ENCODE measurements at regions of chr17 and their contacts with region 1.

Region 1: GRCh38 chr17:35537601-35538141 is at the start of gene SLFN12L:
- DNase-seq: no peak
- H3K27ac ChIP-seq: no peak within 1 kb of the TSS
- CTCF ChIP-seq: no peak

Region 2: GRCh38 chr17:35170968-35171771 is 366.5 kb before region 1 on chr17:
- CTCF ChIA-PET with region 1: interaction called, 14 read pairs
- POLR2A ChIA-PET with region 1: no interaction called
- DNase-seq: peak; percentile 44
- H3K27ac ChIP-seq: no peak overlapping the region
- CTCF ChIP-seq: peak; percentile 31

Region 3: DNA sequence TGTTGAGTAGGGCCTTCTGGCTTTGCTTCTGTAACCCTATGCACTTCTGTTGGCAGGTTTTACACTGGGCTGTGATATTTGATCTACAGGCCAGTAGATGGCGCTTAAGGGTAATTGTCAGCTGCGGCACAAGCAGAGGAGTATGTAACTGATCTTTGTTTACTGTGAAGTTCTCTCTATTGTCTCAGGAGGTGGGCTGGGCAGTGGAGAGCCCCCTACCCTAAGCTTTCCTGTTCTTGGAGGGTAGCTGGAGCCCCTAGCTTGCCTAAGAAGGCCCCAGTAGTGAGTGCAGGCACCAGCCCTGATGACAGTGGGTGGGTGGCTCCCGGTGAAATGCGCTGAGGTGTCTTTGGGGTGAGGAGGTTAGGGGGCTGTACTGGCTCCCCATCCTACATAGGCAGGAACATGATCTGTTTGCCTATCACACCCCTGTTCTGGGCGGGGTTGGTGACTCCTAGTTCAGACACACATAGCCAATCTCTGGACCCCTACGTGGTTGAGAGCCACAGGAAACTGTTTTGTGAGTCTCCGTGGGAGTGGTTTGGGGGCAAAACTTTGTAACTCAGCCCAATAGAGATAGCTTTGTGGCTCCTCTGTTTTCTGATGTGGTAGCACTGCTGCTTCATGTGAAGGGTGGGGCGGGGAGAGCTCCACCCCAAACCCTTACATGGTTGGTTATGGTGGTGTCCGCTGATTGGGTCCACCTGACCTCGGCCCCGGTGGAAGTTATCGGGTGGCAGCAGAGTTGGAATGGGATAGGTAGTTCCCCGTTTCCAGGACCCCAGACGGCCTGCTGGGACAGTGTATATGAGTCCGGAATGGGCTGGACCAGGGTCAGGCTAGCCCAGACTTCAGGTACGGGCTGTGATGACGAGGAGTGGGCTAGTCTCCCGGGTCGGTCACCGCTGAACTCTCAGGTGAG is 224.6 kb before region 1 on chr17:
- CTCF ChIA-PET with region 1: interaction called, 46 read pairs
- POLR2A ChIA-PET with region 1: no interaction called
- DNase-seq: peak; percentile 44
- H3K27ac ChIP-seq: no peak overlapping the region
- CTCF ChIP-seq: peak; percentile 79

Region 4: GRCh38 chr17:35587074-35587971 is 49.7 kb after region 1 on chr17 and contains the start of gene AP2B1:
- CTCF ChIA-PET with region 1: no interaction called
- POLR2A ChIA-PET with region 1: no interaction called
- DNase-seq: peak; percentile 90
- H3K27ac ChIP-seq: peak within 1 kb of the TSS; percentile 97
- CTCF ChIP-seq: no peak